ENCODE measurements at regions of chr1 and their contacts with region 1.

Region 1: DNA sequence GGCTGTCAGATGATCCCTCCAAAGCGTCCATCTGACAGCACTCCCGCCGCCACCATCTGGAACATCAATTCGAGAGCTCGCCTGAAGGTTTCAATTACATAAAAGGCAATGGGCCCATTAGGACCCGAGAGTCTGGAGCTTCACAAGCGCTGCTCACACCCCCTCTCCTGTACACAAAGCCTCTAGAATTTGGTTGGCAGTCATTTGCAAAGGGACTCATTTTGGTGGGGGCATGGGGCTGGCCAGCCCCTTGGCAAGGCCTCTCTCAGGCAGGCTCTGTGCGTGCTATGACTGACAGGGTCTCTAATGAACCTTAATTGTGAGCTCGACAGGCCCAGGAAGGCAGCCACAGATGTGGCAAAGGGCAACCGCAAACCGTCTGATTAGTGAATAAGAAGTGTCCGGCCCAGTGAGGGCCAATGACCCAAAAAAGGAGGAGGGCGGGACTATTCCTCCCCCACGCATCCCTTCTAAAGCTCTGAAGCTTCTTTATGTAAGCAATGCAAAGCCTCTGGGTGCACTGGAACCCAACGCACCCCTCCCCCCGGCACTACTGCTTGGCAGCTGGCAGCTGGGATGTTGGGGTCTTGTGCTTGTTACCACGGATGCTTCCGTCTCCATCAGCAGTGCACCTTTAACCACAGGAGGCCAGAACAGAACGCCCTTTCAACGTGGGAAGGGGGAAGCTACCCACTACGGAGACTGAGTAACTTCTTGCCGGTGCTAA is 79.4 kb downstream of the CAPZB start:
- DNase-seq: no peak
- H3K4me3 ChIP-seq: peak overlapping the region in 1 of 3 donors; percentile 15
- H3K27ac ChIP-seq: peak overlapping the region; percentile 36 to 48
- H3K4me1 ChIP-seq: peaks cover 0 to 7% of the 10 kb centered on the region in 2 donors
- H3K27me3 ChIP-seq: no peaks in the 10 kb centered on the region
- CTCF ChIP-seq: no peak
- POLR2A ChIP-seq: no peak

Region 2: DNA sequence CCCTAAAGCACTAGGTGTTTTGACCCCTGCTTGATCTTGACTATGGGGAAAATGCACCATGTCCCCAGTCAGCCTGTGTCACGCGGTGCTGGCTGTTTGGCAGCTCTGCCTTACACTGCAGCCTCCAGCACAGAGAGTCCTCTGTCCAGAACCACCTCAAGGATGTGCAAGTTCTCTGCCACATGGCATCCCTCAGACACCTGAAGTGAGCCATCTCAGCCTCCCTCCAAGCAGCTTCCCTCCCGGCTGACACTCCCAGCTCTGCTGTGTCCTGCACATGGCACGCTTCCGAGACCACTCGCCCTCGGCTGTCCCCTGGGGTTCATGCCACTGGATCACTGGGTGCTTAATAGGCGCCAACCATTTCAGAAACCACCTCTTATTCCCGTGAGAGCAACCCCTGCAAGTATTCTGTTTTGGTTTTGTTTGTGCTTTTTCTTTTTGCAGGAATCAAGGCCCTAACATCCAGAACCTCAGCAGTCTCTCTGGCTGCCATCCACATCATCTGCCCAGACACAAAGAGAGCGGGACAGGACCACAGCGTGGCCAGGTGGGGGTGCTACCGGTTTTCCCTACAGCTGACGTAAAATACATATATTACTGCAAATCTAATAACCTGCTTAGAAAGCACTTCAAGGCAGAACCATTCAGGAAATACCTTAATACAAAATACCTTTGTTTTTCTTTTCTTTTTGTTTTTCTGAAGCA is 33.7 kb after region 1 on chr1:
- intact Hi-C with region 1: no loop called
- DNase-seq: peak in 1 of 2 donors; percentile 56
- H3K4me3 ChIP-seq: no peak overlapping the region
- H3K27ac ChIP-seq: peak overlapping the region; percentile 88 to 95
- H3K4me1 ChIP-seq: peaks cover 45 to 51% of the 10 kb centered on the region in 2 donors
- H3K27me3 ChIP-seq: no peaks in the 10 kb centered on the region
- CTCF ChIP-seq: no peak
- POLR2A ChIP-seq: no peak

Region 3: DNA sequence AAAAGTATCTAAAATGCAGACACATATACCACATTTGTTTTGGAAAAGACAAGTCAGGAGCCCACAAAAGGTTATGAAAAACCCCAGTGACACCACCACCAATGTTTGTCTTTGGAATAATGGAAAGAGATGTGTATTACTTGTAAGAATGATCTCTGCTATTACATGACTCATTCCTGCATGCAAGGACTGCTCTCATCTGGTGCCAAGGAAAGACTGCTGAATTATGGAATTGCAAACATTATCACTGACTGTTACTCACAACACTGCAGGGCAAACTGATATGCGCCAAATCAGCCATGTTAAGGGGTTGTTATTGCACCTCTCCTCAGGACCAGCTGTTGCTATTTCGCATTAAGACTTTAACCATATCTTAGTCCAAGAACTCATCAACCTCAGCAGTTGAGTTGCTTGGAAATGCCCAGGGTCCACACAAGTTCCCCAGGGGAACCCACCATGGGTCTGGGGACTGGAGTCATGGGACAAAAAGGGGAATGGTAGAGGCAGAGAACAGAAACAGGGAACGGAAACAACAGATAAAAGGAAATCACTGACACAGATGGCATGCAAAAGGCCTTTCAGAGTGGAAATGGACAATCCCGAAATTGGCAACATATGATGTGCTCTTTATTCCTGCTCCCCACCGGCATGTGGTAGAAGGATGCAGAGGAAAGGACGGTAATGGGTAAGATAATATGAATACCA is 45.0 kb after region 1 on chr1:
- intact Hi-C with region 1: loop called (anchors 1 kb)
- DNase-seq: no peak
- H3K4me3 ChIP-seq: no peak overlapping the region
- H3K27ac ChIP-seq: peak overlapping the region; percentile 63 to 81
- H3K4me1 ChIP-seq: peaks cover 25 to 47% of the 10 kb centered on the region in 2 donors
- H3K27me3 ChIP-seq: no peaks in the 10 kb centered on the region
- CTCF ChIP-seq: no peak
- POLR2A ChIP-seq: no peak

Region 4: GRCh38 chr1:19485362-19486187 is 79.7 kb after region 1 on chr1 and contains the start of gene CAPZB:
- intact Hi-C with region 1: loop called (anchors 10 kb)
- DNase-seq: peak; percentile 92 to 93
- H3K4me3 ChIP-seq: peak within 1 kb of the TSS; percentile 99 to 100 (median 100)
- H3K27ac ChIP-seq: peak within 1 kb of the TSS; percentile 99 to 100
- H3K4me1 ChIP-seq: peaks cover 0 to 24% of the 10 kb centered on the region in 2 donors
- H3K27me3 ChIP-seq: no peaks in the 10 kb centered on the region
- CTCF ChIP-seq: no peak
- POLR2A ChIP-seq: peak; percentile 47
- total RNA-seq, gene CAPZB: 112 to 114 (median 113) TPM